HCT116 (cell line): ENCODE measurements at regions of chr15 and their contacts with region 1.

Region 1: DNA sequence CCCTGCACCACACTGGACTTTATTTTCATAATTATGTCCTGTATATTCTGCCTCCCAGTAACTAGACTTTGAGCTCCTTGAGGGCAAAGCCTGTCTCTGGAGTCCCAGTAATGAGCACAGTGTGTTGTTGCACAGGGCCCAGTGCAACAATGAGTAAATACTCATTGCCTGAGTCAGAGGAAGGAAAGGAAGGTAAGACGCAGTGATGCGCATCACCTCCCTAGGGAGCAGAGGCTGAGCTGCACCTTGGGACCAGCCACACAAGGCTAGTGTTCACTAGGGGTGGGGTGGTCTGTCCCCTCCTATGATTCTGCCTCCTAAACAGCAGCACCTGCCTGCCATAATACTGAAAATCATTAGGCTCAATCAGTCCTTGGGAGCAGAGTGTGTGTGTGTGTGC is 86.6 kb upstream of the ADAMTSL3 start:
- DNase-seq: no peak
- ATAC-seq: no peak
- H3K4me3 ChIP-seq: no peak overlapping the region
- H3K27ac ChIP-seq: no peak overlapping the region
- H3K4me1 ChIP-seq: no peaks in the 10 kb centered on the region; a peak in 1 of 4 replicates
- H3K27me3 ChIP-seq: no peaks in the 10 kb centered on the region
- CTCF ChIP-seq: no peak
- POLR2A ChIP-seq: no peak
- RAD21 ChIP-seq: no peak

Region 2: DNA sequence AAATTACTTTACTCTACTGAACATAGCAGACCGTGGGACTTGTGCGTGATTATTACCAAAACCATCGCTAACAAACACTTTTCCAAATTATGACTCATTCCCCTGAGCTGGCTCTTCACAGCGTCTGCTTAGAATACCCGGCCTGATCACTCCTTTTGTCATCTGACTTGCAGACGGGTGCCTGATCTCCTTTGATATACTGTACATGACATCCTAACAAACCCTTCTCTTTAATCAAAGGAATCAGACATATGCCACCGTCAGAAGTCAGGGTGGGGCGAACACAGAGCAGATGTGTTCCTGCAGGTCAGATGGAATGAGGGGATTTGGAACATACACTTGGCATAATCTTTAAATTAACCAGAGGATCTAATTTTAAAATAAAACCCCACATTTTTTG is 168.7 kb before region 1 on chr15:
- CTCF ChIA-PET with region 1: no interaction called
- POLR2A ChIA-PET with region 1: no interaction called
- RAD21 ChIA-PET with region 1: no interaction called
- intact Hi-C with region 1: no loop called
- DNase-seq: no peak
- ATAC-seq: no peak
- H3K4me3 ChIP-seq: no peak overlapping the region
- H3K27ac ChIP-seq: no peak overlapping the region
- H3K4me1 ChIP-seq: peaks cover 0 to 4% of the 10 kb centered on the region in 2 experiments; a peak in 2 of 4 replicates
- H3K27me3 ChIP-seq: peaks cover 3% of the 10 kb centered on the region; the same call in 1 of the 2 replicates
- CTCF ChIP-seq: no peak
- POLR2A ChIP-seq: no peak
- RAD21 ChIP-seq: no peak

Region 3: DNA sequence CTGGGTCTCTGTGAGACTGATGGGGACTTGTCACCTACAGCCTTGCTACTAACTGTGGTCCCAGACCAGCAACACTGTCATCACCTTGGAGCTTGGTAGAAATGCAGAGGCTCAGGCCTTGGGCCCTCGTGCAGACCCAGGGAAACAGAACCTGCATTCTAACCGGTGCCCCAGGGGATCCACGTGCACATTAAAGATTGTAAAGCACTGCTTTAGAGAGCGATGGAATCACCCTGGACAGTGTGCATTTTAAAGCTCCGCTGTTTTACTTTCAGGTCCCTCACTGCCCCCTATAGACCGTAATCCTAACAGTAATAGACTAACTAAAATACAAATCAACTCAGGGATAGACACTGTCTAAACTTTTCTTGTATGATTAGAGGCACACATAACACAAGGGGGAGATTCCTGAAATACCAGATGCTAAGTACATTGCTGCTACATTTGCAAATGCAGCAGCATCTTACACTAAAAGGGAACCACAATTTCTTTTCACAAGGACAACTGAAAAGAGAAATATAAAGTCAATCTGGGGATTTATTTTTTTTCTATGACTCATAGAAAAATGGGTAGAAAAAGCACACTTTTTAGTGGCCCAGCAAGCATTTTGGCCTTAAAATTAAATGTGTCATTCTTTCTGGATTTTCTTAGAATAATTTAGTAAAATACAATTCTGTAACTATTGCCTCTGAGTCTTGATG is 130.7 kb before region 1 on chr15:
- CTCF ChIA-PET with region 1: interaction called, 11 read pairs
- POLR2A ChIA-PET with region 1: no interaction called
- RAD21 ChIA-PET with region 1: interaction called in 1 of 2 experiments, 3 read pairs
- intact Hi-C with region 1: no loop called
- DNase-seq: peak; percentile 33
- ATAC-seq: peak; percentile 90
- H3K4me3 ChIP-seq: no peak overlapping the region
- H3K27ac ChIP-seq: no peak overlapping the region
- H3K4me1 ChIP-seq: no peaks in the 10 kb centered on the region
- H3K27me3 ChIP-seq: no peaks in the 10 kb centered on the region
- CTCF ChIP-seq: peak; percentile 58 to 69 (median 69); a peak in 5 of 6 replicates
- POLR2A ChIP-seq: no peak
- RAD21 ChIP-seq: peak; percentile 75

Region 4: DNA sequence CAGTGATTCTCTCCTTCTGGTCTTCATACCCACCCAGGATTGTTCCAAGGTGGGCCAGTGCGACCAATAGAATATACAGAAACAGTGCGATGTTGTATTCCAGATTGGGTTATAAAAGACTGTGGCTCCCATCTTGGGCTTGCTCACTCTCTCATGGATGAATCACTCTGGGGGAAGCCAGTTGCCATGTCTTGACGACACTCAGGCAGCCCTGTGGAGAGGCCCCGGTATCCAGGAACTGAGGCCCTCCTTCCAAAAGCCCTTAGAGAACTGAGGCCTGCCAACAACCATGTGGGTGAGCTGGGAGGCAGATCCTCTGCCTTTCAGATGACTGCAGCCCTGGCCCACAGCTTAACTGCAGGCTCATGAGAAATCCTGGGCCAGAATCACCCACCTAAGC is 63.0 kb before region 1 on chr15:
- CTCF ChIA-PET with region 1: no interaction called
- POLR2A ChIA-PET with region 1: no interaction called
- RAD21 ChIA-PET with region 1: no interaction called
- intact Hi-C with region 1: no loop called
- DNase-seq: no peak
- ATAC-seq: no peak
- H3K4me3 ChIP-seq: no peak overlapping the region
- H3K27ac ChIP-seq: no peak overlapping the region
- H3K4me1 ChIP-seq: no peaks in the 10 kb centered on the region
- H3K27me3 ChIP-seq: no peaks in the 10 kb centered on the region
- CTCF ChIP-seq: no peak
- POLR2A ChIP-seq: no peak
- RAD21 ChIP-seq: no peak

Region 5: GRCh38 chr15:83837945-83838571 is 270.7 kb after region 1 on chr15:
- CTCF ChIA-PET with region 1: interaction called, 9 read pairs
- POLR2A ChIA-PET with region 1: no interaction called
- RAD21 ChIA-PET with region 1: no interaction called
- intact Hi-C with region 1: loop called (anchors 2 kb)
- DNase-seq: peak; percentile 51
- ATAC-seq: peak; percentile 99
- H3K4me3 ChIP-seq: no peak overlapping the region
- H3K27ac ChIP-seq: no peak overlapping the region
- H3K4me1 ChIP-seq: no peaks in the 10 kb centered on the region
- H3K27me3 ChIP-seq: peaks cover 11% of the 10 kb centered on the region; the same call in 1 of the 2 replicates
- CTCF ChIP-seq: peak; percentile 45 to 78 (median 76); a peak in 5 of 6 replicates
- POLR2A ChIP-seq: no peak
- RAD21 ChIP-seq: peak; percentile 52